HCT116 (cell line): ENCODE measurements at regions of chr5 and their contacts with region 1.

Region 1: DNA sequence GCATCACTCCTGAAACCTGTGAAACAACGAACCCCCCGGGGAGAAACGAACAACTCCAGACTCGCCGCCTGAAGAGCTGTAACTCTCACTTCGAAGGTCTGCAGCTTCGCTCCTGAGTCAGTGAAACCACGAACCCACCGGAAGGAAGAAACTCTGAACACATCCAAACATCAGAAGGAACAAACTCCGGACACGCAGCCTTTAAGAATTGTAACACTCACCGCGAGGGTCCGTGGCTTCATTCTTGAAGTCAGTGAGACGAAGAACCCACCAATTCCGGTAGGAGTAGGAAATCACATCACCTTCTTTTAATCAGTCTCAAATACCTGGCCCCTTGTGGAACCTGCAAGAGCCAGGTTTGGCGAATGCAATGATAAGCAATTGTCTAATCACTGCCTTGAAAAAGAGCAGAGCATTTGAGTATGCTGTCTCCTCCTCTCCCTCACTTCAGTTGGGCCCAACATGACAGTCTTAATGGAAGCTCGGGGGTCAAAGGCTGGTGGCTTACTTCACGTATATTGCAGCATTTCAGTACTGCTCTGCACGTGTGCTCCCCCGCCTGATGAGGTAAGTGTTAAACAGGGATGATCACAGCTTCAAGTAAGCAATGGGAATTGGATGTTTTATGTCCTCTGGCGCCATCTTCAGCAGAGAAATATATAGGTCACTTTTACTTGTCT is 473 bp downstream of the IRGM start:
- DNase-seq: peak; percentile 84
- ATAC-seq: peak; percentile 95
- H3K4me3 ChIP-seq: no peak overlapping the region
- H3K27ac ChIP-seq: no peak overlapping the region
- H3K4me1 ChIP-seq: peaks cover 0 to 4% of the 10 kb centered on the region in 2 experiments; a peak in 2 of 4 replicates
- H3K27me3 ChIP-seq: no peaks in the 10 kb centered on the region
- CTCF ChIP-seq: peak; percentile 44 to 99 (median 74); a peak in 5 of 6 replicates
- POLR2A ChIP-seq: no peak
- RAD21 ChIP-seq: peak; percentile 99

Region 2: DNA sequence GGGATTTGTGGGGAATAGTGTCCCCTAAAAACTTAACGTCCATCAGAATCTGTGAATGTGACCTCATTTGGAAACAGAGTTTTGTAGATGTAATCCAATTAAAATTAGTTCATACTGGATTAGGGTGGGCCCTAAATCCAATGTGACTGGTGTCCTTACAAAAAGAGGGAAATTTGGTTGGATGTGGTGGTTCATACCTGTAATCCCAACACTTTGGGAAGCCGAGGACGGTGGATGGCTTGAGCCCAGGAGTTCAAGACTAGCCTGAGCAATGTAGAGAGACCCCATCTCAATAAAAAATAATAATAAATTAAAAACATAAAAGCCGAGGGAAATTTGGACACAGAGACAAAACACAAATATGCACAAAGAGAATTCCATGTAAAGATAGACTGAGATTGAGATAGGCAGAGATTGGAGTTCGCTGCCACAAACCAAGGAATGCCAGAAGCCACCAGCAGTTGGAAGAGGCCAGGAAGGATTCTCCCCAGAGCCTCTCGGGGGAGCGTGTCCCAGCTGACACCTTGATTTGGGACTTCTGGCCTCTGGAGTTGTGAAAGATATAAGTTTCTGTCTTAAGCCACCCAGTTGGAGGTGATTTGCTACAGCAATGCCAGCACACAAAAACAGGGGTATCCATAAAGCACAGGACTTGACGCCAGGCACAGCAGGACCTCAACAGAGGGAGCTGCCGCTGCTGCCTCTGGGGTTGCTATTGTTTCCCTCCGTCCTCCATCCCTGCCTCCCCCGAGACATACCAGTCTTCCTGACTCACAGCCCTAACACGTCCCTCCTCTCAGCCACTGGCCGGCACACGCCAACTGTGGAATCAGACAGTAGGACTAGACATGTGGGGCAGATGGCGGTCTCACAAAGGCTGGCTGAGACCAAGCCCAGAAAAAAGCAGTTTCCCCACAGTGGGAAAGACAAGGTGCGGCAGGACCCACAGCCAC is 1393.9 kb before region 1 on chr5:
- CTCF ChIA-PET with region 1: no interaction called
- POLR2A ChIA-PET with region 1: no interaction called
- RAD21 ChIA-PET with region 1: no interaction called
- intact Hi-C with region 1: no loop called
- DNase-seq: no peak
- ATAC-seq: no peak; the same call in 1 of the 2 replicates
- H3K4me3 ChIP-seq: peak overlapping the region in 1 of 2 experiments; percentile 1; a peak in 1 of 4 replicates
- H3K27ac ChIP-seq: no peak overlapping the region
- H3K4me1 ChIP-seq: peaks cover 29 to 93% of the 10 kb centered on the region in 2 experiments
- H3K27me3 ChIP-seq: no peaks in the 10 kb centered on the region
- CTCF ChIP-seq: no peak
- POLR2A ChIP-seq: no peak
- RAD21 ChIP-seq: no peak

Region 3: DNA sequence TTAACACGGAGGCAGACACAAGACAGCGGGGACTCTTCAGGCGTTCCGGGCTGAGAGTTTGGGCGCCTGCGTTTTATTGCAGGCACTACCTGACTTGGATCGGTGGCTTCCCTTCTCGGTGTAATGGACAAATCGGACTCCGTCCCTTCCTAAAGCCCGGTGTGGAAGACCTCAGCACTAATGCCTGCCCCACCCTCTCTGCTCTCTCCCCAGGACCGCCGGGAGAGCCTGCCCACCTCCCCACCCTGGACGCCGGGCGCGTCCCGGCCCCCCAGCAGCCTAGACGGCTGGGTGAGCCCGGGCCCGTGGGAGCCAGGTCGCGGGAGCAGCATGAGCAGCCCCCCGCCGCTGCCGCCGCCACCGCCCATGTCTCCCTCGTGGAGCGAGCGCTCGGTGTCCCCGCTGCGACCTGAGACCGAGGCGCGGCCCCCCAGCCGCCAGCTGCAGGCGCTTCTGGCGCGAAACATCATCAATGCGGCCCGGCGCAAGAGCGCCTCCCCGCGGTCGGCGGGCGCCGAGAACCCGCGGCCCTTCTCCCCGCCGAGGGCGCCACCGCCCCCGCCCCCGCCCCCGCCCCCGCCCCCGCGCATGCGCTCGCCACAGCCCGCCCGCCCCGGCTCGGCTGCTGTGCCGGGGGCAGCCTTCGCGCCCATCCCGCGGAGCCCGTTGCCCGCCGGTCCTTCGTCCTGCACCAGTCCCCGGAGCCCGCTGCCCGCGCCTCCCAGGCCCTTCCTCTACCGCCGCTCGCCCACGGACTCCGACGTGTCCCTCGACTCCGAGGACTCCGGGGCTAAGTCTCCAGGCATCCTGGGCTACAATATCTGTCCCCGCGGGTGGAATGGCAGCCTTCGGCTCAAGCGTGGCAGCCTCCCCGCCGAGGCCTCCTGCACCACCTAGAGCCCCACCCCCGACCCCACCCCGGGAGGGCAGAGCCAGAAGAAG is 190.3 kb before region 1 on chr5:
- CTCF ChIA-PET with region 1: no interaction called
- POLR2A ChIA-PET with region 1: no interaction called
- RAD21 ChIA-PET with region 1: no interaction called
- intact Hi-C with region 1: loop called (anchors 5 kb)
- DNase-seq: no peak
- ATAC-seq: peak; percentile 75
- H3K4me3 ChIP-seq: peak overlapping the region; percentile 46 to 64
- H3K27ac ChIP-seq: no peak overlapping the region
- H3K4me1 ChIP-seq: peaks cover 4 to 15% of the 10 kb centered on the region in 2 experiments; a peak in 3 of 4 replicates
- H3K27me3 ChIP-seq: no peaks in the 10 kb centered on the region
- CTCF ChIP-seq: peak; percentile 37 to 59 (median 55); a peak in 5 of 6 replicates
- POLR2A ChIP-seq: no peak
- RAD21 ChIP-seq: peak; percentile 79

Region 4: GRCh38 chr5:150700594-150701293 is 146.1 kb before region 1 on chr5 and contains the start of gene RBM22:
- CTCF ChIA-PET with region 1: interaction called, 11 read pairs
- POLR2A ChIA-PET with region 1: no interaction called
- RAD21 ChIA-PET with region 1: interaction called in 1 of 2 experiments, 3 read pairs
- intact Hi-C with region 1: loop called (anchors 2 kb)
- DNase-seq: peak; percentile 79
- ATAC-seq: peak; percentile 95
- H3K4me3 ChIP-seq: peak within 1 kb of the TSS; percentile 86 to 87
- H3K27ac ChIP-seq: peak within 1 kb of the TSS; percentile 76
- H3K4me1 ChIP-seq: peaks cover 2 to 15% of the 10 kb centered on the region in 2 experiments; a peak in 3 of 4 replicates
- H3K27me3 ChIP-seq: no peaks in the 10 kb centered on the region
- CTCF ChIP-seq: peak; percentile 32 to 69 (median 55); a peak in 5 of 6 replicates
- POLR2A ChIP-seq: peak; percentile 87
- RAD21 ChIP-seq: peak; percentile 22; the same call in 1 of the 2 replicates
- total RNA-seq, gene RBM22: 61.4 TPM

Region 5: GRCh38 chr5:150758531-150759333 is 88.1 kb before region 1 on chr5 and contains the start of gene DCTN4:
- CTCF ChIA-PET with region 1: no interaction called
- POLR2A ChIA-PET with region 1: no interaction called
- RAD21 ChIA-PET with region 1: no interaction called
- intact Hi-C with region 1: loop called (anchors 1 kb)
- DNase-seq: peak; percentile 99
- ATAC-seq: peak; percentile 94
- H3K4me3 ChIP-seq: peak within 1 kb of the TSS; percentile 94 to 95
- H3K27ac ChIP-seq: peak within 1 kb of the TSS; percentile 76
- H3K4me1 ChIP-seq: peaks cover 5 to 22% of the 10 kb centered on the region in 2 experiments
- H3K27me3 ChIP-seq: no peaks in the 10 kb centered on the region
- CTCF ChIP-seq: no peak
- POLR2A ChIP-seq: peak; percentile 63
- RAD21 ChIP-seq: no peak
- total RNA-seq, gene DCTN4: 78.8 TPM

Region 6: DNA sequence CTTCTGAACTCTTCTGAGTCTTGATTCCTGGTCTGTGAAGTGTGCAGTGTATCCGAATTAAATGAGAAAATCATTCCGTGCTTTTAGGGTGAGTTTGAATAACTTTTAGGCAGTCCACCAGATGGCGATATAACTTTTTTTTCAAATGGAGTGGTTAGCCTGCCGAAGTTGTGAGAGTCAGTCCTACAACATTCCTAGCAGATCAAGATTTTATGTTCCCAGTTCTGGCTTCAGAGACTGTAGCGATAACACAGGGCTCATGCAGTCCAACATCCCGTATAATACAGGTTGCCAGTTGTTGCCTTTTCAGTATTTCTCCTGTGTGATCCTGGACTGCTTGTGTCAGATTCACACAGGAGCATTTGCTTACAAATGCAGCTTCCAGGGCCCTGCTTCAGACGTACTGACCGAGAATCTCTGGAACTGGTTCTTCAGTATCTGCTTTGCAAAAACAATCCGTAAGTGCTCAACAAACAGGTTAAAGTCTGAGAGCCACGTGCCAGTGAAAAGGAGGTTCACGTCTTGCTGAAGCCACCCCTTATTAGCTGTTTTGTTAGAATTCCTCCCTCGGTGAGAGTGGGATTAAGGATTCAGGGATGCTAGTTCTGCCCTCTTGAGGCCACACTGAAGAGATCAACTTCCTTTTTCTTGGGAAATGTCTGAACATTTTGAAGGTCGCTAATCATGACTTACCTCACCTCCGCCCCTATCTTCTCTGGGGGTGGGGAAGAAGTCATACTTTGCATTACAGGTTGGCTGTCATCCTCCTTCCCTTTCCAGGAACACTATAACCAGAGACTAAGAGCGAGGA is 45.5 kb before region 1 on chr5:
- CTCF ChIA-PET with region 1: interaction called, 3 read pairs
- POLR2A ChIA-PET with region 1: no interaction called
- RAD21 ChIA-PET with region 1: no interaction called
- intact Hi-C with region 1: loop called (anchors 1 kb)
- DNase-seq: peak; percentile 51
- ATAC-seq: peak; percentile 84
- H3K4me3 ChIP-seq: peak overlapping the region; percentile 19 to 52
- H3K27ac ChIP-seq: peak overlapping the region; percentile 59
- H3K4me1 ChIP-seq: peaks cover 0 to 14% of the 10 kb centered on the region in 2 experiments; a peak in 2 of 4 replicates
- H3K27me3 ChIP-seq: no peaks in the 10 kb centered on the region
- CTCF ChIP-seq: peak; percentile 33 to 73 (median 42); a peak in 5 of 6 replicates
- POLR2A ChIP-seq: no peak
- RAD21 ChIP-seq: peak; percentile 43